Activated T-helper 1 cell treated with anti-CD3 and anti-CD28 coated beads, Interleukin-12 subunit alpha, Interleukin-12 subunit beta, Interleukin-2, Interleukin-4 antibody, amounts not matched to agents 30 ng/mL and 10 ng/mL and 1 ng/mL, durations not matched to agents 14 hours and 24 hours and 36 hours (primary cell): ENCODE measurements at regions of chr6 and their contacts with region 1.

Region 1: GRCh38 chr6:32413427-32414047 is 6.6 kb upstream of the BTNL2 start:
- DNase-seq: peak; percentile 67
- H3K4me3 Mint-ChIP-seq: no peak overlapping the region
- H3K27ac Mint-ChIP-seq: no peak overlapping the region
- H3K4me1 Mint-ChIP-seq: peaks cover 12% of the 10 kb centered on the region
- H3K27me3 Mint-ChIP-seq: peaks cover 46% of the 10 kb centered on the region

Region 2: GRCh38 chr6:32244946-32245398 is 168.6 kb before region 1 on chr6:
- intact Hi-C with region 1: loop called (anchors 2 kb)
- DNase-seq: peak; percentile 57
- H3K4me3 Mint-ChIP-seq: peak overlapping the region; percentile 9
- H3K27ac Mint-ChIP-seq: no peak overlapping the region
- H3K4me1 Mint-ChIP-seq: peaks cover 27% of the 10 kb centered on the region
- H3K27me3 Mint-ChIP-seq: peaks cover 12% of the 10 kb centered on the region

Region 3: DNA sequence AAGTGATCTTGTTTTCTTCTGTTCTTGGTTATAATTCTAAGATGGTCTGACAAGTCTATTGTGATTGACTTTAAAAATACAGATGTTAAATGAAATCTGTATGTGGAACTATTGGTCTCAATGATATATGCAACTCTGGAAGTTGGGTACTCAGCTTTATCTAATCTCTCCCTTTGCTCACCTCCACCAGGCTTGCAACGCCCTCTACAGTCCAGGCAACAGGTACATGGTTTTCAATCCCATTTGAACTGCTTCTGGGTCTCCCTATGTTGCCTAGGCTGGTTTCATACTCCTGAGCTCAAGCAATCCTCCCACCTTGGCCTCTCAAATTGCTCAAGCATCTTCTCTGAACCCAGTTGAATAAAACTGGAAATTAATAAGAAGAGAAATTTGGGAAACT is 278.5 kb after region 1 on chr6:
- intact Hi-C with region 1: loop called (anchors 2 kb)
- DNase-seq: peak; percentile 32
- H3K4me3 Mint-ChIP-seq: no peak overlapping the region
- H3K27ac Mint-ChIP-seq: no peak overlapping the region
- H3K4me1 Mint-ChIP-seq: peaks cover 18% of the 10 kb centered on the region
- H3K27me3 Mint-ChIP-seq: peaks cover 43% of the 10 kb centered on the region

Region 4: GRCh38 chr6:32700391-32701040 is 287.0 kb after region 1 on chr6:
- intact Hi-C with region 1: loop called (anchors 1 kb)
- DNase-seq: no peak
- H3K4me3 Mint-ChIP-seq: no peak overlapping the region
- H3K27ac Mint-ChIP-seq: no peak overlapping the region
- H3K4me1 Mint-ChIP-seq: no peaks in the 10 kb centered on the region
- H3K27me3 Mint-ChIP-seq: peaks cover 43% of the 10 kb centered on the region

Region 5: DNA sequence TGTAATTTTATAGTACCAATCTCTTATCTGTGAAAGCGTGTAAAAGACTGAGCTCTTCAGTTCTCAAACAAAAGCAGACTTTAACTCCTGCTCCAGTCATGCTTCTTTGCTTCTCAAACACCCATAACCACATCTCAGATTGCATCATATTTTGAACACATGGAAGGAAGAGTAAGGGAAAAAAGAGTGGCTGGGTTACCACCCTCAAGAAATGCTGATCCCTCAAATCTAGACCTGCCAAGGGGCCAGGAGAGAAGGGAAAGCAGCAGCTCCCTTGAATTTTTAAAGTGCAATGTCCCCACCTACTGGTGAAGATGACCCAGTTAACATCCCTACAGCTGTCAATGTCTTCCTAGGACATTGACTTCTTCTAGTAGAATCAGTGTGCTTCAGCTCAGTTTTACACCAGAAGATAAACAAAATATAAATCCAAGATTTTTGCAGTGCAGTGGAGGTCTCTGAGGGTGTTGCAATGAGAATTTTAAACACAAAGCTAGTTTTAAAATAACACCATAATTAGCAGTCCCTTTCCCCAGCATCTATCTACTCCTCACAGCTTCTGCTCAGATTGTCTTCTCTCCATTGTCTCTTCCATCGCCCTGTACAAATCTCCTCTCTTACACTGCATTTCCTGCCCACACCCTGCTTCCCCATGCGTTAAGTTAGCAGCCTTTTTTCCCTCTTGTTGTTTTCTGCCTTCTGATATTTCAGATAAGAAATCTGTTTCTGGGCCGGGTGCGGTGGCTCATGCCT is 372.4 kb after region 1 on chr6:
- intact Hi-C with region 1: loop called (anchors 1 kb)
- DNase-seq: peak; percentile 25
- H3K4me3 Mint-ChIP-seq: no peak overlapping the region
- H3K27ac Mint-ChIP-seq: no peak overlapping the region
- H3K4me1 Mint-ChIP-seq: no peaks in the 10 kb centered on the region
- H3K27me3 Mint-ChIP-seq: peaks cover 56% of the 10 kb centered on the region

Region 6: GRCh38 chr6:32796848-32797776 is 383.6 kb after region 1 on chr6:
- intact Hi-C with region 1: loop called (anchors 1 kb)
- DNase-seq: peak; percentile 65
- H3K4me3 Mint-ChIP-seq: peak overlapping the region; percentile 46
- H3K27ac Mint-ChIP-seq: no peak overlapping the region
- H3K4me1 Mint-ChIP-seq: peaks cover 31% of the 10 kb centered on the region
- H3K27me3 Mint-ChIP-seq: peaks cover 53% of the 10 kb centered on the region

Region 7: GRCh38 chr6:32868257-32868788 is 454.8 kb after region 1 on chr6:
- intact Hi-C with region 1: loop called (anchors 1 kb)
- DNase-seq: peak; percentile 75
- H3K4me3 Mint-ChIP-seq: no peak overlapping the region
- H3K27ac Mint-ChIP-seq: no peak overlapping the region
- H3K4me1 Mint-ChIP-seq: peaks cover 36% of the 10 kb centered on the region
- H3K27me3 Mint-ChIP-seq: peaks cover 1% of the 10 kb centered on the region